Cardiac septum (tissue), 1 donor: ENCODE measurements at regions of chr13 and their contacts with region 1.

Region 1: DNA sequence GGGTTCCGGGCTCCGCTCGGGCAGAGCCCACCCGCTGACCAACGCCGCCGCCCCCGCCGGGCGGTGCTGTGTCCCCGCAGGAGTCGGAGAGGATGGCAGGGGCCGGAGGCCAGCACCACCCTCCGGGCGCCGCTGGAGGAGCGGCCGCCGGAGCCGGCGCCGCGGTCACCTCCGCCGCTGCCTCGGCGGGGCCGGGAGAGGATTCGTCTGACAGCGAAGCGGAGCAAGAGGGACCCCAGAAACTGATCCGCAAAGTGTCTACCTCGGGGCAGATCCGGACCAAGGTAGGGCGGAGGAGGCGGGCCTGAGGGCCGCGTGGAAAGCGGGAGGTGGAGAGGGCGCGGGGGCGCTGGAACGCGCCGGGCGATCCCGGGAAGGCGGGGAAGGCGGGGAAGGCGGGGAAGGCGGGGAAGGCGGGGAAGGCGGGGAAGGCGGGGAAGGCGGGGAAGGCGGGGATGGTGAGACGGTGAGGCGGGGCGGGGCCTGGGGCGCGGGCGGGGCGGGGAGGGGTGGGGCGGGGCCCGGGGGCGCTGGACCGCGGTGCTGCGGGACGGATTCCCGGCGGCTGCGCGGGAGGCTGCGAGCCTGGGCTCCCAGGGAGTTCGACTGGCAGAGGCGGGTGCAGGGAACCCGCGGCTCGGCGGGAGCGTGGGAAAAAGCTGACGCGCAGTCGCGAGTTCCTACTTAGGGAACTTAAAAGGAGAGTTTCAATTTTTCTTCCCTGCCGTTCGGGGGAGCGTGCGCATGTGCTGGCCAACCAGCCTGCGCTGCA is 420 bp downstream of the DGKH start:
- DNase-seq: peak; percentile 94

Region 2: GRCh38 chr13:41915081-41915480 is 133.8 kb before region 1 on chr13:
- intact Hi-C with region 1: loop called (anchors 2 kb)
- DNase-seq: no peak

Region 3: GRCh38 chr13:42110410-42111155 is 61.7 kb after region 1 on chr13:
- intact Hi-C with region 1: loop called (anchors 5 kb)
- DNase-seq: no peak